WTC11 (cell line): ENCODE measurements at regions of chr17 and their contacts with region 1.

Region 1: DNA sequence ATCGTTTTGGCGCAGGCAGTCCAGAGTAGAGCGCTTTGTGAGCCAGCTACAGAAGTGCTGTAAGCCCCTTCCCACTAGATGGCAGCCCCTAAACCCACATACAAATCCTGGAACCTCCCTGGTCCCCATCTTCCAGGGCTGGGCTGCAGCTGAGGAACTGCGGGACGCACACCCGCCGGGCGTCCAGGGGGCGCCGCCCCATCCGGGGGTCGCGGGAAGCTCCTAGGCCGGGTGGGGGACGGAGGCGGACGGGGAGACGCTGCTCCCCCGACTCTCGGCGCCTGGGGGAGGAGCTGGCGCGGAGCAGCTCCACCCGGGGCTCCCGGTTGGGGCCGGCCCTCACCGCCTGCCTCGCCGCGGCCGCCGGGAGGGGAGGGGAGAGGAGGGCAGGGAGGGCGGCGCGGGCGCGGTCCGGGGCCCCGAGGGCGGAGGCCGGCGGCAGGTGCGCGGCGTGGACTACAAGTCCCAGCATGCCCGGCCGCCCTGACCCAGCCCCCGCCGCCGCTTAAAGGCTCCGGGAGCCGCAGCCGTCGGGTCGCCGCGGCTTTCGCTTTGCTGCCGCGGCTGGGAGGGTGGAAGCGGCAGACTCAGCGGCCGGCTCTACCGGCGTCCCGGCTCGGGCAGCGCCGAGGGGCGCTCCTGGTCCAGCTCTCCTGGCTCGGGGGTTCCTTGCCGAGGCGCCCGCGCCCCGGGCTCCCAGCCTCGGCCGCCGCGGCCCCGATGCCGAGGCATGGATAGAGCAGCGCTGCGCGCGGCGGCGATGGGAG is at the start of gene KSR1:
- DNase-seq: peak; percentile 91
- ATAC-seq: peak; percentile 83
- H3K4me3 Mint-ChIP-seq: peak within 1 kb of the TSS; percentile 90
- H3K27ac Mint-ChIP-seq: peak within 1 kb of the TSS; percentile 89
- H3K4me1 Mint-ChIP-seq: peaks cover 43% of the 10 kb centered on the region
- H3K27me3 Mint-ChIP-seq: peaks cover 12% of the 10 kb centered on the region
- CTCF ChIP-seq: no peak
- total RNA-seq, gene KSR1: 38.0 to 45.5 TPM (median 39.7 TPM) in 3 replicates

Region 2: DNA sequence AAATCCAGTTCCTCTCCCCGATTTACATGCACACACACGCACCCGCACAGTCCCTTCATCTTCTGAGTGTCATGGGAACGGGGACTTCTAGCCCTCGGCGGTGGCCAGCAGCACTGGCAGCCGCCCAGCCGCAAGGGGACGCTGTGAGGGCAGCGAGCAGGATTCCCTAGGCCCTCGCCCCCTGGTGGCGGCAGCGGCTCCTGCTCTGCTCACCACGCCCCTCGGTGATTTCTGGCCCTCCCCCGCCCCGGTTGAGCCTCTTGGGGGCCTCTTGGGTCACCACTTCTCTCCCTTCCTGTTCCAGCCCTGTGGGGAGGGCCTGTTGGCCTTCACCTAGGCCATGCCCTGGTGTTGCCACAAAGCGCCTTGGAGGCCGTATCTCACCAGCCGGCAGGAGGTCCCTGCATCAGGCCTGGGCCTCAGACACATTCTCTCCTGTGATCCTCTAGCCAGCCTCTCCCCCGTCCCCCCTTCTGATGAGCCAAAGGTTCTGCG is 75.0 kb before region 1 on chr17:
- CTCF ChIA-PET with region 1: interaction called, 13 read pairs
- POLR2A ChIA-PET with region 1: no interaction called
- DNase-seq: peak; percentile 92
- ATAC-seq: peak; percentile 92
- H3K4me3 Mint-ChIP-seq: no peak overlapping the region
- H3K27ac Mint-ChIP-seq: no peak overlapping the region
- H3K4me1 Mint-ChIP-seq: no peaks in the 10 kb centered on the region
- H3K27me3 Mint-ChIP-seq: no peaks in the 10 kb centered on the region
- CTCF ChIP-seq: peak; percentile 100

Region 3: GRCh38 chr17:27494192-27495091 is 38.3 kb after region 1 on chr17:
- CTCF ChIA-PET with region 1: interaction called, 12 read pairs
- POLR2A ChIA-PET with region 1: interaction called, 4 read pairs
- DNase-seq: no peak
- ATAC-seq: peak; percentile 34
- H3K4me3 Mint-ChIP-seq: peak overlapping the region; percentile 25
- H3K27ac Mint-ChIP-seq: peak overlapping the region; percentile 93
- H3K4me1 Mint-ChIP-seq: peaks cover 86% of the 10 kb centered on the region
- H3K27me3 Mint-ChIP-seq: no peaks in the 10 kb centered on the region
- CTCF ChIP-seq: no peak

Region 4: GRCh38 chr17:27513849-27514248 is 57.8 kb after region 1 on chr17:
- CTCF ChIA-PET with region 1: interaction called, 14 read pairs
- POLR2A ChIA-PET with region 1: interaction called, 3 read pairs
- DNase-seq: no peak
- ATAC-seq: peak; percentile 22
- H3K4me3 Mint-ChIP-seq: no peak overlapping the region; the same call in 1 of the 2 replicates
- H3K27ac Mint-ChIP-seq: peak overlapping the region; percentile 89
- H3K4me1 Mint-ChIP-seq: peaks cover 80% of the 10 kb centered on the region
- H3K27me3 Mint-ChIP-seq: no peaks in the 10 kb centered on the region
- CTCF ChIP-seq: no peak

Region 5: GRCh38 chr17:27519550-27519949 is 63.5 kb after region 1 on chr17:
- CTCF ChIA-PET with region 1: interaction called, 14 read pairs
- POLR2A ChIA-PET with region 1: no interaction called
- DNase-seq: no peak
- ATAC-seq: peak; percentile 33
- H3K4me3 Mint-ChIP-seq: no peak overlapping the region
- H3K27ac Mint-ChIP-seq: peak overlapping the region; percentile 62
- H3K4me1 Mint-ChIP-seq: peaks cover 78% of the 10 kb centered on the region
- H3K27me3 Mint-ChIP-seq: no peaks in the 10 kb centered on the region
- CTCF ChIP-seq: no peak

Region 6: DNA sequence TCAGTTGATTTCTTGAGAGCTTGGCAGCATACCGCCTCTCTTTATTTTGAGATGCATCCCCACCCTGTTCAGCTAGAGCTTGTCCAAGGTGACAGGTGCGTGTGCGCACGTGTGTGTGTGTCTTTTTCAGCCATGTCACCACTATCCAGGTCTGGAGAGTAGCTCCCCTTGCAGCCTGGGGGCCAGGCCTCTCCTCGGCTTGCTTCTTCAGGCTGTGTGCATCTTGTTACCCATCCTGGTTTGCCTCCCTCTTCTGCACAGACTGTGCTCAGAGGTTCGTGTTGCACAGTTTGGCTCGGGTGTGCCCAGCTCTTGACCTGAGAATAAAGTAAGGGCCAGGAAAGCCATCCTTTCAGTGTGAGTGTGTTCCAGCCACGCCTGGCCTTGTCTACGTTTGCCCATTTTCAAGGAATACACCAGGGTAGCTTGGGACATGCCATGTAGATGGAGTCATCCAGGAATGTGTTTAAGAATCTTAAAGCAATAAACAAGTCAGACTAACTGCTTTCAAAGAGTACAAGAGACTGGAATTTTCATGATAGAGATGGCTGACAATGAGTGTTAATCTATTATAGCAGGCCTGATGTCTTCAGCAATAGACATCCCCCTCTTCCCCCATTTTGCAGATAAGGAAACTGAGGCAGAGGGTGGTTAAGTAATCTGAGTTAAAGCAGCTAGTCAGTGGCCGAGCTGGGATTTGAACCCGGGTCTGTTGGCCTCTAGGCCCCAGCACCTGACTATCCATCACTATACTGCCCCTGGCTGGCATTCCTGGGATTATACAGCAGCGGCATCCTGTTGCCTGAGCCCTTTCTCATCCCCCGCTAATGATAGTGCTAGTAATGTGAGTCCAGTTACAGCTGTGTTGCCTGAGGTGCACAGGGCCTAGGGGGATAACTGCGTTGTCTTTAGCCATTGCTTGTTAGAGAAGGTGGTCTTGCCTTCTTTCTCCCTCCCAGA is 78.0 kb after region 1 on chr17:
- CTCF ChIA-PET with region 1: interaction called, 19 read pairs
- POLR2A ChIA-PET with region 1: no interaction called
- DNase-seq: peak; percentile 36
- ATAC-seq: peak; percentile 70
- H3K4me3 Mint-ChIP-seq: no peak overlapping the region
- H3K27ac Mint-ChIP-seq: no peak overlapping the region
- H3K4me1 Mint-ChIP-seq: peaks cover 56% of the 10 kb centered on the region
- H3K27me3 Mint-ChIP-seq: no peaks in the 10 kb centered on the region
- CTCF ChIP-seq: no peak

Region 7: DNA sequence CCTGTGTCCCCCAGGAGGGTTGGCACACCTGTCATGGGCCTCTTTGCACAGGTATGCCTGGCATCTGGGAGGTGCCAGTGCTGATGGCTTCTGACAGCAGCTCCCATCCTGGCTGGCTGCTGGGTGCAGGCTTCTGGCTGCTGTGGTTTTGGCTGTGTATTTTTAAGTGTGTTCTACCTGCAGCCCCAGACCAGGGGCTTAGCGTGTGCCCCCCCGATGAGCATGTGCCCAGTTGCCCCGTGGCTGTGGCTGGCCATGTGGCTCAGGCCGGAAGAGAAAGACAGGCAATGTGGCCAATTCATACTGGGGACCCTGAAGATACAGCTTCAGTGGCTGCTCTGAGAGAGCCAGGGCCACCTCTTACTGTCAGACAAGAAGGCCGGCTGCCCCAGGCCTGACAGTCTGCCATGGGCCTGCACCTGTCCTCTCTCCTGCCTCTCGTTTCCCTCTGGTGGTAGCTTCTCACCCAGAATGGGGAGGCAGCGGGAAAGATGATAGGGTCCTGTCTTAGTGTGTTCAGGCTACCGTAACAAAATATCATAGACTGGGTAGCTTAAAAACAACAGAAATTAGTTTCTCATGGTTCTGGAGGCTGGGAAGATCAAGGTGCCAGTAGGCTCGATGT is 137.2 kb after region 1 on chr17:
- CTCF ChIA-PET with region 1: interaction called, 41 read pairs
- POLR2A ChIA-PET with region 1: no interaction called
- DNase-seq: no peak
- ATAC-seq: no peak
- H3K4me3 Mint-ChIP-seq: no peak overlapping the region
- H3K27ac Mint-ChIP-seq: no peak overlapping the region
- H3K4me1 Mint-ChIP-seq: peaks cover 14% of the 10 kb centered on the region
- H3K27me3 Mint-ChIP-seq: no peaks in the 10 kb centered on the region
- CTCF ChIP-seq: no peak